CD14-positive monocyte (primary cell): ENCODE measurements at regions of chr6 and their contacts with region 1.

Region 1: DNA sequence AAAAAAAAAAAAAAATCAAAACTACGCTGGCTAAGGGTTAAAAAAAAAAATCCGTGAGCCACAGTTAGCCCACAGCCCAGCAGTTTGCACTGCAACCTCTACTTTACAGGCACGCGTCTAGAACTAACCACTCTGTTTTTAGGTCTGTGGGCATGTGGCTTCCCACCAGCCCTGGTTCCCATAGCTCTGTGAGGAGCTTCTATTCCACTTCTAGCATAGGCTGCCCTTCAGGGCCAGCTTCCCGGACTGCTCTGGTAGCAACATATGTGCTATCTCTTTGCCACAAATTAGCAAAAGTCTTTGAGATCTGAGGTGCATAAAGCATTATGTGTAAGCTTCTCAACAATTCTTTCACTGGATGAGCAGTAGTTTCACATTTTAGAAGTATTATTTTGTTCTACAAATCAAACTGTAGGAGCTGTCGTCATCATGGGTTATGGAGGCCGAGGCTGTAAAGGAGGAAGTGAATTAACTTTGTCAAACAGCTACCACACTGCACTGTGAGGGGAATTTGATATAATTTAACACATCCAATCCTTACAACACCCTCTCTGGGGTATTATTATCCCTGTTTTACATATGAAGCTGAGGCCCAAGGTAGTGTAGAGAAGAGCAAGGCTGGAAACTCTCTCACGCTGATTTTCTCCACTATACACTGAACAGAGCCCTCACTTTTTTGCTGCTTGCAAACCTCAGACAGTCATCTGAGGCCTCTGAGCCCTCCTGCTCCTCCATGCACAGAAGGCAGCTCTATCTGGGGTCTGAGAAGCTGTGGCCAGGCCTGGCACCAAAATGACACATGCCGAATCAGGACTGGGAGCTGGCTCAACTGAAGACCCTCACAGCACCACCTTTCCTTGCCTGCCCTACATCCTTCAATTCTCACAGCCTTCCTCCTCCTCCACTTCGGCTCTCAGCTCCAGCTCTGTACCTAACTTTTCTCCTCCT is 35.4 kb downstream of the MAN1A1 start:
- DNase-seq: peak in 2 of 3 donors; percentile 41 to 46
- H3K4me3 ChIP-seq: peak overlapping the region in 1 of 3 experiments; percentile 29
- H3K4me3 Mint-ChIP-seq: peak overlapping the region; percentile 35 to 46
- H3K27ac ChIP-seq: peak overlapping the region; percentile 68 to 71
- H3K27ac Mint-ChIP-seq: peak overlapping the region; percentile 82 to 96 (median 92)
- H3K4me1 ChIP-seq: peaks cover 52 to 64% of the 10 kb centered on the region in 2 donors
- H3K4me1 Mint-ChIP-seq: peaks cover 65% of the 10 kb centered on the region
- H3K27me3 ChIP-seq: no peaks in the 10 kb centered on the region
- H3K27me3 Mint-ChIP-seq: peaks cover 0 to 2% (median 1%) of the 10 kb centered on the region in 3 donors
- CTCF ChIP-seq: no peak

Region 2: GRCh38 chr6:119129148-119129967 is 184.9 kb before region 1 on chr6:
- intact Hi-C with region 1: no loop called
- DNase-seq: peak; percentile 58 to 73 (median 68)
- H3K4me3 ChIP-seq: no peak overlapping the region
- H3K4me3 Mint-ChIP-seq: no peak overlapping the region
- H3K27ac ChIP-seq: no peak overlapping the region
- H3K27ac Mint-ChIP-seq: peak overlapping the region in 1 of 7 donors; percentile 11
- H3K4me1 ChIP-seq: peaks cover 10 to 13% of the 10 kb centered on the region in 2 donors
- H3K4me1 Mint-ChIP-seq: peaks cover 13% of the 10 kb centered on the region
- H3K27me3 ChIP-seq: no peaks in the 10 kb centered on the region
- H3K27me3 Mint-ChIP-seq: peaks cover 0 to 3% (median 2%) of the 10 kb centered on the region in 3 donors
- CTCF ChIP-seq: peak; percentile 84

Region 3: DNA sequence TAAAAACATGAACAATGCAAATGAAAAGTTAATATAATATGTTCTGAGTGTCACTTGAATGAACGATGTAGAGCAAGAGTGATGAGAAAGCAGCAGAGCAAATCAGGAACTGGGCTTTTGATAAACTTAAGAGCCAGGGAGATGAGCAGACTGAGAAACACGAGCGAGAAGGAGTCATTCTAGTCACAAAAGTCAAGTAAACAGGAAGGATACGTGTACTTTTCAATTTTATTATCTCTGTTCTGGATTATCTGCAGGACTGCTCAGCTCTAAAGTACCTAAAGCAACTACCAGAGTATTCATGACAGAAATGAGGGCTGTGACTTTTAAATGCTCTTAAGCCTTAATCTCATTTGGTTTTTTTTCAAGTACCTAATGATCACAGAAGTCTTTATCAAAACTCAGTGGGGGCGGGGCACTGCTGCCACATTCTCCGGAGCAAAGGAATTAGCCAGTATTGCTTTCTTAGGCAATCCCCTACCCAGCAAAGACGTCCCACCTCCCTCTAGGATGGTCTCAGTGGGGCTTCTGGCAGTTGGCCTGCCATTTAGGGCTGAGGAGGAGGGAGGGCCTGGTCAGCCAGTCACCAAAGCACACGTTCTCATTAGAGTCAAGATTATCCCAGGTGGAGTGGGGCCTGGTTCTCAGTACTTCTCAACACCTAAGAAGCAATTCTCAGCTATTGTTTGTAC is 26.7 kb after region 1 on chr6:
- intact Hi-C with region 1: loop called (anchors 2 to 5 kb)
- DNase-seq: peak in 2 of 3 donors; percentile 23 to 45
- H3K4me3 ChIP-seq: peak overlapping the region in 1 of 3 experiments; percentile 38
- H3K4me3 Mint-ChIP-seq: no peak overlapping the region
- H3K27ac ChIP-seq: peak overlapping the region; percentile 31 to 80
- H3K27ac Mint-ChIP-seq: peak overlapping the region; percentile 93 to 97 (median 94)
- H3K4me1 ChIP-seq: peaks cover 34 to 37% of the 10 kb centered on the region in 2 donors
- H3K4me1 Mint-ChIP-seq: peaks cover 50% of the 10 kb centered on the region
- H3K27me3 ChIP-seq: no peaks in the 10 kb centered on the region
- H3K27me3 Mint-ChIP-seq: peaks cover 0 to 2% (median 0%) of the 10 kb centered on the region in 3 donors
- CTCF ChIP-seq: no peak

Region 4: DNA sequence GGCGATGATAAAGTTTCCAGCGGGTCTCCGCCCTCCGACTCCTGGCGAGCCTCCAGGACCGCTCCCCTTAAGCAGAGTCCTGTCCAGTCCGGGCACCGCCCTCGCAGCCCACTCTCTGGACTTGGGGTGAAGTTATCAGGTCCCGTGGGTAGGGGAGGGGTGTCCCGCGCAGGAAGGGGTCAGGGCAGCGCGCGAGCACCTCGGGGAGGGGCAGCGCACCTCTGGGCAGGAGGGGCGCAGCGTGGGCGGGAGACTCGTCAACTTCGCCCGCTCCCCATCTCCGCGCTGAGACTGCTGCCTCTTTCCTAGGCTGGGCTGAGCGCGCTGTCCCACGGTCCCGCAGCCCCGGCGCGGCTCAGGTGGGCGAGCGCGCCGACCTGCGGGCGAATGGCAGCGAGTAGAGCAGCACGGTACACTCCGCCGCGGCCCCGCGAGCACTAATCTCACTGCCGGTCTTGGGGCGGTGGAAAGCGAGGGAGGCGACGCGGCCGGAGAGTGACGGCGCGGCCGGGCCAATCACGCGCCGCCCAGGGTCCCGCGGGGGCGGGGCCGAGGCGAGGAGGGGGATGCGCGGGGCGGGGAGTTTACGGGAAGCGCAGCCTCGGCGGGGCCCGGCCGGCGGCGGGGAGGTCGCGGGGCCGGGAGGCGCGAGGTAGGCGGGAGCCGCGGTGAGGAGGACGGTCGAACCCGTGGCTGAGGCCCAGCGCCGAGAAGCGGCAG is 35.3 kb after region 1 on chr6 and contains the start of gene MAN1A1:
- intact Hi-C with region 1: loop called in 1 of 2 experiments (anchors 5 kb)
- DNase-seq: peak; percentile 76 to 83 (median 81)
- H3K4me3 ChIP-seq: peak within 1 kb of the TSS; percentile 95 to 96 (median 95)
- H3K4me3 Mint-ChIP-seq: peak within 1 kb of the TSS; percentile 95 to 96
- H3K27ac ChIP-seq: peak within 1 kb of the TSS; percentile 83 to 91
- H3K27ac Mint-ChIP-seq: peak within 1 kb of the TSS; percentile 86 to 93 (median 90)
- H3K4me1 ChIP-seq: peaks cover 42 to 50% of the 10 kb centered on the region in 2 donors
- H3K4me1 Mint-ChIP-seq: peaks cover 56% of the 10 kb centered on the region
- H3K27me3 ChIP-seq: no peaks in the 10 kb centered on the region
- H3K27me3 Mint-ChIP-seq: peaks cover 3 to 8% (median 5%) of the 10 kb centered on the region in 3 donors
- CTCF ChIP-seq: no peak
- polyA plus RNA-seq, gene MAN1A1: 11.0 to 20.4 (median 16.1) TPM

Region 5: GRCh38 chr6:119800526-119800925 is 486.3 kb after region 1 on chr6:
- intact Hi-C with region 1: no loop called
- DNase-seq: no peak
- H3K4me3 ChIP-seq: no peak overlapping the region
- H3K4me3 Mint-ChIP-seq: no peak overlapping the region
- H3K27ac ChIP-seq: no peak overlapping the region
- H3K27ac Mint-ChIP-seq: no peak overlapping the region
- H3K4me1 ChIP-seq: no peaks in the 10 kb centered on the region
- H3K4me1 Mint-ChIP-seq: no peaks in the 10 kb centered on the region
- H3K27me3 ChIP-seq: no peaks in the 10 kb centered on the region
- H3K27me3 Mint-ChIP-seq: no peaks in the 10 kb centered on the region
- CTCF ChIP-seq: no peak